Gastrocnemius medialis (tissue), 4 donors: ENCODE measurements at regions of chr17 and their contacts with region 1.

Region 1: DNA sequence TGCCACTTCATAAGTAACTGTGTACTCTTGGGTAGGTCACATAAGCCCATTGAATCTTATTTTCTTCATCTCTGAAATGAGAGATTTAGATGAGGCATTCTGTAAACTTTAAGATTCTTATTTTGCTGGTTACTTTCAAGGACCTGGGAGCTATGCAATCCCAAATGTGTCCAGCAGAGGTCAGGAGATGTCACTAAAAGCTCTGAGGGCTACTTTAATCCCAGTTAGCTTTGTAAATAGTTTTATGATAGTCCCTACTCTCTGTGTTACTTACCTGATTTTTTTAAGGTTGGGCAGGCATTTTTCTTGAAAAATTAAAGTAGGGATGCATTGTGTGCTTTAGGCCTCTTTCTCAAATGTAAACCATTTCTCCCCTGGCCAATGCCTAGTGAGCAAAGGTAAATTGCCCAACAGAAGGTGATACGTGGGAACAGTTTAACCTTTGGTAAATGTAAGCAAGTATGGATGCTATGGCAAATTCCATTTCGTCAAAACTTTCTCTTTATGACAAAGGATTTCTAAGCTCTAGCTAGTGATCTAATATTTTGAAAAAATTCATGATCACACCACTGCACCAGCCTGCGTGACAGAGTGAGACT is 57.1 kb upstream of the WSB1 start:
- DNase-seq: peak; percentile 38 to 70
- ATAC-seq: peak; percentile 87 to 89
- H3K4me3 ChIP-seq: no peak overlapping the region
- H3K27ac ChIP-seq: no peak overlapping the region
- H3K4me1 ChIP-seq: peaks cover 0 to 3% of the 10 kb centered on the region in 2 donors
- H3K27me3 ChIP-seq: no peaks in the 10 kb centered on the region
- CTCF ChIP-seq: peak; percentile 87 to 94 (median 92)
- POLR2A ChIP-seq: no peak

Region 2: DNA sequence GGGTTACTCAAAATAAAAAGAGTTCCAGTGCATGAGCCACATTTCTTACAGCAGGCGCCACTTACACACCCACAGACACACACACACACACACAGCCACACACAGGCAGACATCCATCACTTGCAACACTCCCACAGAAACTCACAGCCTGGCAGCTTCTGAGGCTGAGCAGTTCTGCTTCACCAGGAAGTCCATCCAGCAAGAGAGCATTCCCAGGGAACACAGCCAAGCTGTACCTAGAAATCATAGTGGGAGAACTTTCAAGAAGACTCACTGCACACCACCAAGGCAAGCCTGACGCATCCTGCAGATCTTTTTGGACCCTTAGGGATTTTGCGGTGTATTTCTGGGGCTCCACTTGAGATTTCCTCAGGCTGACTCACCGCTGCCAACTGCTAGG is 83.8 kb before region 1 on chr17:
- in situ Hi-C with region 1: no loop called
- intact Hi-C with region 1: no loop called
- DNase-seq: no peak
- ATAC-seq: no peak
- H3K4me3 ChIP-seq: no peak overlapping the region
- H3K27ac ChIP-seq: no peak overlapping the region
- H3K4me1 ChIP-seq: no peaks in the 10 kb centered on the region
- H3K27me3 ChIP-seq: no peaks in the 10 kb centered on the region
- CTCF ChIP-seq: no peak
- POLR2A ChIP-seq: no peak

Region 3: DNA sequence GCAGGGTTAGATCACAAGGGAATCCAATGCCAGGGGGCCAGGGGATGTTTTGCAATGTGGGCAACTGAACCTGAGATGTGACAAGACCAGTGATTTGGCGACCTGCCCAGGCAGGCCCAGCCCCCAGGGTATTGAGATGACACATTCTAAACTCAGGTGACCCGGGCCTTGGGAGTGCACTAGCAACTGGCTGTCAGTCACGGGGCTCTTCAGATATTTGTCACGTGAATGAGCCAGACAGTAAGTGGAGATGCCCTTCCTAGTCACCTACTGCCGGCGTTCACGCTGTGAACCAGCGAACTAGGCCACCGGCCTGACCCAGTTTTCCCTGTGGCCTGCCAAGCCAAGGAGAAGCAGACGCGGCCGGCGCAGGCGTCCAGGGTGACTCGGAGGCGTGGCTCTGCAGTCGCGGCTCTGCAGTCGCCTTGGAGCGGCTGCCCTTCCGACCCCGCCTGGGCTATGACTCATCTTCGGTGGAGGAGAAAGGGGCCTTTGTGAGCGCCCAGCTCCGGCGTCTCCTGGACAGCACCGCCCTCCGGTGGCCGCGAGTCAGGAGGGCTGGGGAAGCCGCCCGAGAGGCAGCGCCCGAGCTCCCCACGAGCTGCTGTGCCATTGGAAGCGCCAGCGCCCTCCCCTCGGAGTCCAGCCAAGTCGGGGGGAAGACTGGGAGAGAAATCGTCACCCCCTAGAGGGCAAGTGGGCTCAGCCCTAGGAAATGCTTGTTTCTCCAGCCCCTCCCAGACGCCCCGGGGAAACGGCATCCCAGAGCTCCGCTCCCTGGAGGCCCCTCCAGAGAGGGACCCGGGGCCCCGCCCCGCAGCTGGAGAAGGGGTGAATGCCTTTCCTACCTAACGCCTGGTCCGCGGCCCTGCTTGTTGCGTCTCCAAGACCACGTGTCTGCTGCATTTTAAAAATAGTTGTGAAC is 95.9 kb after region 1 on chr17:
- in situ Hi-C with region 1: loop called in 1 of 4 experiments (anchors 10 kb)
- intact Hi-C with region 1: loop called (anchors 2 kb)
- DNase-seq: peak; percentile 97 to 99
- ATAC-seq: peak; percentile 89 to 91
- H3K4me3 ChIP-seq: peak overlapping the region; percentile 48 to 57 (median 52)
- H3K27ac ChIP-seq: peak overlapping the region; percentile 89 to 95 (median 94)
- H3K4me1 ChIP-seq: peaks cover 16 to 17% of the 10 kb centered on the region in 2 donors
- H3K27me3 ChIP-seq: no peaks in the 10 kb centered on the region
- CTCF ChIP-seq: peak; percentile 93 to 97 (median 94)
- POLR2A ChIP-seq: peak; percentile 36 to 56

Region 4: GRCh38 chr17:27381007-27381501 is 144.2 kb after region 1 on chr17:
- in situ Hi-C with region 1: no loop called
- intact Hi-C with region 1: loop called (anchors 1 kb)
- DNase-seq: peak; percentile 17 to 40
- ATAC-seq: peak in 1 of 2 donors; percentile 40
- H3K4me3 ChIP-seq: no peak overlapping the region
- H3K27ac ChIP-seq: no peak overlapping the region
- H3K4me1 ChIP-seq: peaks cover 10 to 13% of the 10 kb centered on the region in 2 donors
- H3K27me3 ChIP-seq: peaks cover 0 to 8% (median 0%) of the 10 kb centered on the region in 3 donors
- CTCF ChIP-seq: peak; percentile 66 to 84 (median 76)
- POLR2A ChIP-seq: no peak

Region 5: GRCh38 chr17:27455914-27456680 is 219.3 kb after region 1 on chr17 and contains the start of gene KSR1:
- in situ Hi-C with region 1: no loop called
- intact Hi-C with region 1: loop called (anchors 5 kb)
- DNase-seq: peak; percentile 44 to 67
- ATAC-seq: peak; percentile 86 to 91
- H3K4me3 ChIP-seq: peak within 1 kb of the TSS; percentile 73 to 92 (median 86)
- H3K27ac ChIP-seq: peak within 1 kb of the TSS; percentile 71 to 82 (median 78)
- H3K4me1 ChIP-seq: peaks cover 4 to 10% of the 10 kb centered on the region in 2 donors
- H3K27me3 ChIP-seq: no peaks in the 10 kb centered on the region
- CTCF ChIP-seq: peak in 3 of 5 experiments; percentile 34 to 44 (median 38)
- POLR2A ChIP-seq: peak; percentile 69 to 89
- total RNA-seq, gene KSR1: 10.4 to 17.7 (median 13.2) TPM